Activated CD4-positive, alpha-beta memory T cell treated with anti-CD3 and anti-CD28 coated beads, Interleukin-2, amount 10 ng/mL, durations not matched to agents 7 days and 5 days (primary cell): ENCODE measurements at regions of chr2 and their contacts with region 1.

Region 1: GRCh38 chr2:177164584-177165052 is 48.0 kb upstream of the HNRNPA3 start:
- DNase-seq: peak; percentile 83
- H3K4me3 Mint-ChIP-seq: no peak overlapping the region
- H3K27ac Mint-ChIP-seq: no peak overlapping the region
- H3K4me1 Mint-ChIP-seq: peaks cover 36% of the 10 kb centered on the region
- H3K27me3 Mint-ChIP-seq: peaks cover 9% of the 10 kb centered on the region

Region 2: GRCh38 chr2:177080746-177081284 is 83.8 kb before region 1 on chr2:
- CTCF ChIA-PET with region 1: no interaction called
- POLR2A ChIA-PET with region 1: no interaction called
- DNase-seq: no peak
- H3K4me3 Mint-ChIP-seq: no peak overlapping the region
- H3K27ac Mint-ChIP-seq: no peak overlapping the region
- H3K4me1 Mint-ChIP-seq: no peaks in the 10 kb centered on the region
- H3K27me3 Mint-ChIP-seq: peaks cover 22% of the 10 kb centered on the region

Region 3: GRCh38 chr2:177175917-177176668 is 11.5 kb after region 1 on chr2:
- CTCF ChIA-PET with region 1: interaction called, 24 read pairs
- POLR2A ChIA-PET with region 1: no interaction called
- DNase-seq: no peak
- H3K4me3 Mint-ChIP-seq: no peak overlapping the region
- H3K27ac Mint-ChIP-seq: no peak overlapping the region
- H3K4me1 Mint-ChIP-seq: no peaks in the 10 kb centered on the region
- H3K27me3 Mint-ChIP-seq: peaks cover 8% of the 10 kb centered on the region

Region 4: GRCh38 chr2:177195194-177195593 is 30.6 kb after region 1 on chr2:
- CTCF ChIA-PET with region 1: interaction called, 54 read pairs
- POLR2A ChIA-PET with region 1: interaction called, 4 read pairs
- DNase-seq: no peak
- H3K4me3 Mint-ChIP-seq: no peak overlapping the region
- H3K27ac Mint-ChIP-seq: no peak overlapping the region
- H3K4me1 Mint-ChIP-seq: peaks cover 12% of the 10 kb centered on the region
- H3K27me3 Mint-ChIP-seq: no peaks in the 10 kb centered on the region

Region 5: GRCh38 chr2:177229448-177230242 is 65.0 kb after region 1 on chr2:
- CTCF ChIA-PET with region 1: interaction called, 10 read pairs
- POLR2A ChIA-PET with region 1: interaction called, 5 read pairs
- DNase-seq: no peak
- H3K4me3 Mint-ChIP-seq: no peak overlapping the region
- H3K27ac Mint-ChIP-seq: peak overlapping the region; percentile 48
- H3K4me1 Mint-ChIP-seq: peaks cover 35% of the 10 kb centered on the region
- H3K27me3 Mint-ChIP-seq: no peaks in the 10 kb centered on the region

Region 6: DNA sequence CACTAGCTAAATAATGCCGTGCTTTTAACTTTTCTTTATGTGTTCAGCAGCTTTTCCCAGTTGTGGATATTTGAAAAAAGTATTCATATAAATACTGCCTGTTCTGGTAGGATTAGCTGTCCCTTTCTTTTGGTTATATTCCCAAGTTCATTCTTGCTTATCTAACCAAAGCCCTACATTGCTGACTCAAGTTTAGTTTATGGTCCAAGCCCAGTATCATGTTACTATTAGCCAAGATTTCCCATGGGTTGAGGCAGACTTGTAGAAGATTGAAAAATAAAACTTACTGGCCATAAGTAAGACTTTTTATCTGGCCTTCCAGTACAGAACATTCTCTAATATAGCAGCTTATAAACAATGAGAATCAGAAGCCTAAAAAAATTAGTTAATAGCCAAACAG is 149.6 kb after region 1 on chr2:
- CTCF ChIA-PET with region 1: interaction called, 17 read pairs
- POLR2A ChIA-PET with region 1: no interaction called
- DNase-seq: no peak
- H3K4me3 Mint-ChIP-seq: no peak overlapping the region
- H3K27ac Mint-ChIP-seq: no peak overlapping the region
- H3K4me1 Mint-ChIP-seq: peaks cover 17% of the 10 kb centered on the region
- H3K27me3 Mint-ChIP-seq: no peaks in the 10 kb centered on the region

Region 7: GRCh38 chr2:177392373-177393202 is 228.0 kb after region 1 on chr2 and contains the start of gene AGPS:
- CTCF ChIA-PET with region 1: interaction called, 31 read pairs
- POLR2A ChIA-PET with region 1: interaction called, 5 read pairs
- DNase-seq: peak; percentile 86
- H3K4me3 Mint-ChIP-seq: peak within 1 kb of the TSS; percentile 96
- H3K27ac Mint-ChIP-seq: peak within 1 kb of the TSS; percentile 80
- H3K4me1 Mint-ChIP-seq: peaks cover 51% of the 10 kb centered on the region
- H3K27me3 Mint-ChIP-seq: no peaks in the 10 kb centered on the region
- total RNA-seq, gene AGPS: 52.0 to 52.8 TPM